BJ (cell line): ENCODE measurements at regions of chr12 and their contacts with region 1.

Region 1: GRCh38 chr12:32198555-32198954 is 91.9 kb downstream of the BICD1 start:
- DNase-seq: no peak
- H3K4me3 ChIP-seq: no peak overlapping the region
- H3K27me3 ChIP-seq: no peaks in the 10 kb centered on the region
- CTCF ChIP-seq: no peak

Region 2: DNA sequence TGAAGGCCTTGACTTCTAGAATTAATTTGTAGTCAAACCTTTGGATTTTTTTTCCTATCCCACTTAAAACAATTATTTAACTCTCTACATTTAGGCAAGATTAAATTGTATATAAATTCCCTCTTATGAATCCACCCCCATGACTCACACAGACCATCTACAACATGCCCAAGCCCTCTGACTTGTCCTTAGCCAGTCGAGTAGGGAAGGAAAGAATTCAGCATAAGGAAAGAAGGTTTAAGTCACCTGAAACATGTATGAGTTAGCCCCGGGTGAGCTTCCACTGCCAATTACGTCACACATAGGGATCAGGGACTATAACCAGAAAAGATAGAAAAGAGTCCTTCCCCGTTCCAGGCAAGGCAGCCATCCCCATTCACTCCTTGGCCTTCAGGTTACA is 254.3 kb before region 1 on chr12:
- CTCF ChIA-PET with region 1: no interaction called
- POLR2A ChIA-PET with region 1: interaction called, 14 read pairs
- DNase-seq: no peak
- H3K4me3 ChIP-seq: no peak overlapping the region
- H3K27me3 ChIP-seq: no peaks in the 10 kb centered on the region
- CTCF ChIP-seq: no peak